ENCODE measurements at regions of chr9 and their contacts with region 1.

Region 1: DNA sequence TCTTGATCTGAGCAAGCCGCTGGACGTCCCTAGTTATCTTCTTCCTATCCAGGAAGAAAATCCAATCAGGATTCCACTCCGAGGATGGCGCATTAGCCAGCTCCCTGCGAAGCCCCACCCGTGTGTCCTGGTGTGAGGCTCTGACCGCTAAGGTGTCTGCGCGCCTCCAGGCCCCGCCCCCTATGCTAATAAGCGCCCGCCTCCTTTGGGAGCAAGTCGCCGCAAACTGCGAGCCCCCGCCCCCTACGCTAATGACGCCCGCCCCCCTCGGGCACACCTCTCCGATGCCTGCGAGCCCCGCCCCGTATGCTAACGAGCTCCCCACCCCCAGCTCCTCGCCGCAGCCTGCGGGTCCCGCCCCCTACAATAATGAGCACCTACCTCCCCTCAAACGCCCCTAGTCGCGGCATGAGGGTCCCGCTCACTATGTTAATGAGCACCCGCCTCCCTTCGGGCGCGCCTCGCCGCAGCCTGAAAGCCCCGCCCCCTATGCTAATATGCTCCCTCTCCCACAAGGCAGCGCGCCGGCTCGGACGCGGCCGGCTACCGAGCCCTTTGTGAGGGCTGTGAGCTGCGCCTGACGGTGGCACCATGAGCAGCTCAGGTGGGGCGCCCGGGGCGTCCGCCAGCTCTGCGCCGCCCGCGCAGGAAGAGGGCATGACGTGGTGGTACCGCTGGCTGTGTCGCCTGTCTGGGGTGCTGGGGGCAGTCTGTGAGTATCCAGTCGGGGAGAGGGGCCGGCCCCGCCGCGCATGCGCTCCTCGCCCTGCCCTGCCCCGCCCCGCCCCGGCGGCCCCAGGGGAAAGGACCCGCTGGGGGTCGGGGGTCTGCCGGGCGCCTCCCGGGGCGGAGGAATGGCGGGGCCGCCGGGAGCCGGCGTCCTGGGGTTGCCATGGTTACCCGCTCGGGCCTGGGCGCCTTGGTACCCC is at the start of gene CACFD1:
- DNase-seq: peak; percentile 87 to 98
- H3K4me3 ChIP-seq: peak within 1 kb of the TSS; percentile 61
- H3K27ac ChIP-seq: peak within 1 kb of the TSS; percentile 67
- H3K4me1 ChIP-seq: peaks cover 13% of the 10 kb centered on the region
- H3K27me3 ChIP-seq: no peaks in the 10 kb centered on the region
- CTCF ChIP-seq: no peak
- total RNA-seq, gene CACFD1: 28.7 and 32.7 TPM in 2 replicates

Region 2: DNA sequence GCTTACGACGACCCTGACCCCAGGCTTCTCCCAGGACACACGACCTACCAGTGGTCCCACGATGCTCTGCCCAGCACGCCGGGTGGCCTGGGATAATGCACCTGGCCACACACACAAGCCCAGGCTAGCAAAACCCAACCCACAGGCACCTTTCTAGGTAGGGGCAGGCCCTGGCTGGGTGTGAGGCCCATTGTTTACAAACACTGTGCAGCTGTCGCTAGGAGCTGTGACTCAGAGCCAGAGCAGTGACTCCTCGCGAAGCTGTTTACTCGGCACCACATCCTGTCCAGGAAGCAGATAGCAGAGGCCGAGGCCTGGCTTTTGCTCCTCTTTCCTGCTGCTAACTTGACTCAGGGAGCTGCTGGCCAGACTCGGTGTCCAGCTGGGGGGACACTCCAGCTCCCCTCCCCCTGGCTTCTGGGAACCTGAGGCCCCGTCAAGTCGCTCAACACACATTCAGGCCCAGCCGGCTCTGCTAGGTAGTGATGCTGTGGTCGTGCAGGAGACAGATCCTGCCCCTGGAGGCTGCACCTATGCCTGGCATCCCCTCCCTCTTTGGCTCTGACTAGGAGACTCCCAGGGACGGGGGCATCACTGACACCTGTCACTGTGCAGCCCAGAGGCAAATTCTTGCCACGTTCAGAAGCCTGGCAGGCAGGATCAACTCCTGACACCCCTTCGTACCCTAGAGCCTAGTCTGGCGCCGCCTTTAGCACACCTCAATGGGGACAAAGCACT is 325.9 kb before region 1 on chr9:
- CTCF ChIA-PET with region 1: no interaction called
- POLR2A ChIA-PET with region 1: interaction called, 16 read pairs
- intact Hi-C with region 1: no loop called
- DNase-seq: peak; percentile 97 to 98
- H3K4me3 ChIP-seq: no peak overlapping the region; the same call in 1 of the 2 replicates
- H3K27ac ChIP-seq: peak overlapping the region; percentile 70
- H3K4me1 ChIP-seq: peaks cover 47% of the 10 kb centered on the region
- H3K27me3 ChIP-seq: no peaks in the 10 kb centered on the region
- CTCF ChIP-seq: no peak

Region 3: DNA sequence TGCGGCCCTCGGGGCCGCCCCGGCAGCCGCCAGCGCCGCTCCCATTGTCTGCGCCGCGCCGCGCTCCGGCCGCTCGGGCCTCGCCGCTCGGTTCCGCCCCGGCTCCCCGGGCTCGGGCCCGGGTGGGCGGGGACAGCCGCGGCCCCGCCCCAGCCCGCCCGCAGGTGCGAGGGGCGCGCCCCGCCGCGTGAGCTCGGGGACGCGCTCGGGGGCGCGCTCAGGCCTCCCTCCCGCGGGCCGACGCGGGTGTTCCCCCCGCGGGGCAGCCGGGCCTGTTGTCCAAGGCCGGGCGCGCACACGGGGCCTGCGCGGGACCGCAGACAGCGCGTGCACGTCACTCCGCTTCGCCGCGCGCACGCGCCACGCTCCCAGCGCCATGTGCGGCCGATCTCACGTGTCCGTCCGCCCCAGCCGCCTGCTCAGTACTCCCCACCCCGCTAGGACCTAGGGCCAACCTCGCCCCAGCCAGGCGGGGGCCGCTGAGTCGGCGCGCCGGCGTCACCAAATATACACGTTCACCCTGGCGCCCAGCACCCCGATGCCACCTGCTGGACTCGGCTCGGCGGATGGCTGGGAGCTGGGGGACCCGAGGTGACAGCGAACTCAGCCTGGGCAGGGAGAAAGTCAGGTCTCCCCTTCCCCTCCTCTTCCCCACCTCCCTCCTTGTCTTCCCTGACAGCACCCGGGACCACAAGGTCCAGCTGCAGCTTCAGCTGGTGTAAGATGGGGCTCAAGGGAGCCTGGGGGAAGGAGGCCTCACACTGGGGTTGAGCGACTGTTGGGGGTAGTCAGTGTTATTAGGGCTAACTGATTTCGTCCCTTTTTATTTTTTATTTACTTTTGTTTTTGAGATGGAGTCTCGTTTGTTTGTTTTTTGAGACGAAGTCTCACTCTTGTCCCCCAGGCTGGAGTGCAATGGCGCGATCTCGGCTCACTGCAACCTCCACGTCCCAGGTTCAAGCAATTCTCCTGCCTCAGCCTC is 310.3 kb before region 1 on chr9:
- CTCF ChIA-PET with region 1: interaction called, 4 read pairs
- POLR2A ChIA-PET with region 1: interaction called, 16 read pairs
- intact Hi-C with region 1: no loop called
- DNase-seq: peak; percentile 84 to 96
- H3K4me3 ChIP-seq: peak overlapping the region; percentile 61
- H3K27ac ChIP-seq: peak overlapping the region; percentile 57
- H3K4me1 ChIP-seq: peaks cover 21% of the 10 kb centered on the region
- H3K27me3 ChIP-seq: no peaks in the 10 kb centered on the region
- CTCF ChIP-seq: no peak; the same call in 1 of the 2 replicates

Region 4: GRCh38 chr9:133551446-133551845 is 91.7 kb after region 1 on chr9:
- CTCF ChIA-PET with region 1: no interaction called
- POLR2A ChIA-PET with region 1: interaction called, 10 read pairs
- intact Hi-C with region 1: no loop called
- DNase-seq: no peak
- H3K4me3 ChIP-seq: no peak overlapping the region
- H3K27ac ChIP-seq: no peak overlapping the region
- H3K4me1 ChIP-seq: no peaks in the 10 kb centered on the region
- H3K27me3 ChIP-seq: peaks cover 93% of the 10 kb centered on the region
- CTCF ChIP-seq: no peak

Region 5: GRCh38 chr9:133768859-133769425 is 309.2 kb after region 1 on chr9:
- CTCF ChIA-PET with region 1: no interaction called
- POLR2A ChIA-PET with region 1: no interaction called
- intact Hi-C with region 1: no loop called
- DNase-seq: no peak
- H3K4me3 ChIP-seq: no peak overlapping the region
- H3K27ac ChIP-seq: no peak overlapping the region
- H3K4me1 ChIP-seq: no peaks in the 10 kb centered on the region
- H3K27me3 ChIP-seq: no peaks in the 10 kb centered on the region
- CTCF ChIP-seq: no peak